ENCODE measurements at regions of chr7 and their contacts with region 1.

Region 1: DNA sequence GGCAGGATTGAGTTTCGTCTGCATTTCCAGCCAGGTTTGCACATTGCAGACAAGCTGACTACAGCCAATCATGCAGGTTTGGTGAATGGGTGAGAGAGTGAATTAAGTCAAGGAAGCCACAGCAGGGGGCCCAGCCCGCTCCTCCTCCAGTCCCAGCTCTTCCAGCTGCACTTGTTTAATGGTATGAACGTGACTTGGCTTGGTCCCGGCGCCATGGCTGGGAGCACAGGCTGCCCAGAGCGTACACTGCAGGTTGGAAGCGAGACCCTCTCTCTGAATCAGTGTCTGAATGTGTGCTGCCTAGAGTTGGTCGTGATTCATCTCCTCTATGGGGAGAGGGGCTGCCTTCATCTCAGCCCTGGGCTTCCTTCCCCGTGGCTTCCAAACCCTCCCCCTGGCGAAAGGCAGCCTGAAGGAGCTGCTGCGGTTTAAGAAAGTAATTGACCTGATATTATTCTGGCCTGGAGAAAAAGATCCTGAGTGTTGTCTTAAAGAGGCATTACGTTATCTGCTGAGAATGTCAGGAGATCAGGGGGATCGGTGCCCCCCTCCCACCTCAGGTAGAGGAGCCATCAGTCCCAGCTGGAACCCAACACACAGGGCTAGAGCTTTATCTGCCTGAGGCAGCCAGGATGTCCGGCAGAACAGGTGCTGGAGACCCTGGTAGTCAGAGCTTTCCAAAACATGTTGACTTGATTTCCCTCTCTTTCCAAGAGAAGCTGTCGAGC is 132.1 kb downstream of the COL26A1 start:
- DNase-seq: no peak
- H3K4me3 ChIP-seq: no peak overlapping the region
- H3K27ac ChIP-seq: no peak overlapping the region
- H3K4me1 ChIP-seq: no peaks in the 10 kb centered on the region
- H3K27me3 ChIP-seq: no peaks in the 10 kb centered on the region
- CTCF ChIP-seq: no peak
- POLR2A ChIP-seq: no peak

Region 2: GRCh38 chr7:100983451-100984187 is 511.1 kb before region 1 on chr7:
- intact Hi-C with region 1: loop called (anchors 5 kb)
- DNase-seq: no peak
- H3K4me3 ChIP-seq: no peak overlapping the region
- H3K27ac ChIP-seq: no peak overlapping the region
- H3K4me1 ChIP-seq: no peaks in the 10 kb centered on the region
- H3K27me3 ChIP-seq: no peaks in the 10 kb centered on the region
- CTCF ChIP-seq: no peak
- POLR2A ChIP-seq: no peak

Region 3: GRCh38 chr7:101823096-101823495 is 328.3 kb after region 1 on chr7:
- intact Hi-C with region 1: no loop called
- DNase-seq: no peak
- H3K4me3 ChIP-seq: no peak overlapping the region
- H3K27ac ChIP-seq: no peak overlapping the region
- H3K4me1 ChIP-seq: no peaks in the 10 kb centered on the region
- H3K27me3 ChIP-seq: no peaks in the 10 kb centered on the region
- CTCF ChIP-seq: no peak
- POLR2A ChIP-seq: no peak